IMR-90 (cell line): ENCODE measurements at regions of chr3 and their contacts with region 1.

Region 1: GRCh38 chr3:112990672-112991602 is at the start of gene GTPBP8:
- DNase-seq: peak; percentile 84
- ATAC-seq: peak; percentile 98
- H3K4me3 ChIP-seq: peak within 1 kb of the TSS; percentile 75
- H3K27ac ChIP-seq: peak within 1 kb of the TSS; percentile 86
- H3K4me1 ChIP-seq: no peaks in the 10 kb centered on the region
- H3K27me3 ChIP-seq: peaks cover 2% of the 10 kb centered on the region; the same call in 1 of the 2 replicates
- CTCF ChIP-seq: no peak
- POLR2A ChIP-seq: peak; percentile 83
- RAD21 ChIP-seq: no peak
- total RNA-seq, gene GTPBP8: 15.4 and 19.4 TPM in 2 replicates

Region 2: DNA sequence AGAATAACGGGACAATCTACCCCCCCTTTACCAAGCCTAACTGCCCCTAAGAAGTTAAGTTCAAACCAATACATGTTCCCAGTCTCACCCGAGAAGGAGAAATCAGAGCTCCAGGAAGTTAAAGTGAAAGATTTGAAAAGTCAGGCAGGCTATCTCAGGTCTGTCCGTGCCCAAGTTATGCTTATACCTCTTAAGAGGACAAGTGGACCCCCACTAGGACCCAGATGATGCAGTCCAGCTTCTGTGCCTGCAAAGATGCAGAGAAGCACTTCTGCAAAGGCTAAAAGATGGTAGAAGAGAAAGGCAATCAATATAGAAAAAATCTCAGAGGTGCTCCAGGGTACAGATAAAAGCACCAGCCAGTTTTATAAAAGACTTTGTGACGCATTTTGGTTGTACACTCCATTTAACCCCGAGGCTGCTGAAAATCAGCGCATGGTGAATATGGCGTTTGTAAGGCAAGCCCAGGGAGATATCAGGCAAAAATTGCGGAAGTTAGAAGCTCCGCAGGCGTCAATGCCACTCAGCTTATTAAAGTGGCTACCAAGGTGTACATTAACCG is 687.1 kb before region 1 on chr3:
- CTCF ChIA-PET with region 1: no interaction called
- POLR2A ChIA-PET with region 1: no interaction called
- dilution Hi-C with region 1: no loop called
- in situ Hi-C with region 1: loop called (anchors 25 kb)
- intact Hi-C with region 1: no loop called
- DNase-seq: peak; percentile 28
- ATAC-seq: peak; percentile 64
- H3K4me3 ChIP-seq: peak overlapping the region; percentile 27; the same call in 1 of the 2 replicates
- H3K27ac ChIP-seq: no peak overlapping the region
- H3K4me1 ChIP-seq: peaks cover 12% of the 10 kb centered on the region
- H3K27me3 ChIP-seq: no peaks in the 10 kb centered on the region
- CTCF ChIP-seq: no peak
- POLR2A ChIP-seq: no peak
- RAD21 ChIP-seq: no peak

Region 3: GRCh38 chr3:112858410-112859069 is 132.4 kb before region 1 on chr3:
- CTCF ChIA-PET with region 1: no interaction called
- POLR2A ChIA-PET with region 1: no interaction called
- dilution Hi-C with region 1: no loop called
- in situ Hi-C with region 1: no loop called
- intact Hi-C with region 1: no loop called
- DNase-seq: peak; percentile 10
- ATAC-seq: no peak
- H3K4me3 ChIP-seq: no peak overlapping the region
- H3K27ac ChIP-seq: no peak overlapping the region
- H3K4me1 ChIP-seq: no peaks in the 10 kb centered on the region
- H3K27me3 ChIP-seq: no peaks in the 10 kb centered on the region
- CTCF ChIP-seq: no peak
- POLR2A ChIP-seq: no peak
- RAD21 ChIP-seq: no peak